Activated T-helper 1 cell treated with anti-CD3 and anti-CD28 coated beads, Interleukin-12 subunit alpha, Interleukin-12 subunit beta, Interleukin-2, Interleukin-4 antibody, amounts not matched to agents 30 ng/mL and 10 ng/mL and 1 ng/mL, durations not matched to agents 14 hours and 24 hours and 36 hours (primary cell): ENCODE measurements at regions of chr20 and their contacts with region 1.

Region 1: DNA sequence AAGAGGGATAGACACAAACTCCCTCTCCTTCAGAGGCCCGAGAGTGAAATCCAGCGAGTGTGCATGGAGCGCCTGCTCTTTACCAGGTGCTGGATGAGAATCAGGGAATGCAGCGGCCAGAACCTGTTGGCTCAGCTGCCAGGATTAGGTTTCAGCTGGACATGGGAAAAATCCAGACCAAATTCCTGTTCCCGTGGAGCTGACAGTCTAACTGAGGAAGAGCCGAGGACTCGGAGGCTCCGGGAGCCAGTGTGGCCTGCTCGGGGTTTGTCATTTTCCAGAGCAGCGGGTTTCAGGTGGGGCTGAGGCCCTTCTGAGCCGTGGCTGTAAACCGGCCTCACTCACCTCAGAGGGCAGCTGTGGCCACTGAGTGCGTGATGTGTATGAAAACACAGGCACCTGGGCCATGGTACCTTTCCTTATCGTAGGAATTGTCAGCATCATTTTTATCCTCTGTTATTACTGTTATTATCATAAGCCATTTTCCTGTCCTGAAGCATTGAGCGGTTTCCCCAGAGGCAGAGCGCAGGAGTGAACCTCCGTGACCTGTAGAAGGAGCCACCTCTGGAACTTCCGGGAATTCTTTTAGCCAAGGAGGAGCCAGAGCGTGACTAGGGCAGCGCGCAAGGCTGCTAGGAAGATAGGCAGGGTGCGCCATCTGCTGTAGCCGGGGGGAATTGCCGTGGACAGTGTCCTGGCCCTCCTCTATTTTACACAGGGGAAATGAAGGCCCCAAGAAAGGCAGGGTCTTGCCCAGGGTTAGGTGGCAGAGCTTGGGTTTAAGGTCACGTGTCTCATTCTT is 27.3 kb downstream of the PKIG start:
- DNase-seq: peak; percentile 69
- H3K4me3 Mint-ChIP-seq: peak overlapping the region; percentile 39
- H3K27ac Mint-ChIP-seq: no peak overlapping the region
- H3K4me1 Mint-ChIP-seq: peaks cover 12% of the 10 kb centered on the region
- H3K27me3 Mint-ChIP-seq: no peaks in the 10 kb centered on the region

Region 2: DNA sequence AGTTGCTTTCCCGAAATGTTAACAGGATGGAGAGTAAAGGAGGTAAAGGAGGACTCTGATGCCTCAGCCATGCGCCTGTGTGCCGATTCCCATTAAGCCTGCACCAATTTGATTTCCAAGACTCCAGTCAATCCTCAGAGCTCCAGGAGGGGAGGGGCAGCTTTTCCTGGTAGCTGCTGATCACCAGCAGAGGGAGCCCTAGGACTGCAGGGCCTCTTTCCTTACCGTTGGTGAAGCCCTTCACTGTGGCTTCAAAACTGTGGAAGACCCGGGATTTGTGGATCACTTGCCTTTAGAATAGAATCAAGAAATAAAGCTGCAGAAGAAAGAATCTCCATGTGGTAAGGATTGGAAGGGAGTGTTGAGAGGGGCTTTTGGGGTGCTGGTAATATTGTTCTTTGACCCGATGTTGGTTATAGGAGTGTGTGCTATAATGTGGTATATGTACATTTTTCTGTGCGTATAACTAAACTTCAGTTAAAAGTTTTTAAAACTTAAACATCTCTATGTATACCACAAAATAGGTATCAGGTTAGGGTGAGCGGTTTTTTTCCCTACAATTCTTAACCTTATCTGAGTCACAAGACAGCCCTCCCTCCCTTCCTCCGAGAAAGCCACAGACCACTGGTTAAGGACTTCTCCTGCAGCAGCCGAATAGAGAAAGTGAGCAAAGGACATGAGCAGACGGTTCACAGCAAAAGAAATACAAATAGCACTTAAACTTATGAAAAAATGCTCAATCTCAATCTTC is 392.2 kb before region 1 on chr20:
- intact Hi-C with region 1: loop called (anchors 1 kb)
- DNase-seq: peak; percentile 50
- H3K4me3 Mint-ChIP-seq: peak overlapping the region; percentile 73
- H3K27ac Mint-ChIP-seq: peak overlapping the region; percentile 45
- H3K4me1 Mint-ChIP-seq: peaks cover 41% of the 10 kb centered on the region
- H3K27me3 Mint-ChIP-seq: peaks cover 3% of the 10 kb centered on the region

Region 3: DNA sequence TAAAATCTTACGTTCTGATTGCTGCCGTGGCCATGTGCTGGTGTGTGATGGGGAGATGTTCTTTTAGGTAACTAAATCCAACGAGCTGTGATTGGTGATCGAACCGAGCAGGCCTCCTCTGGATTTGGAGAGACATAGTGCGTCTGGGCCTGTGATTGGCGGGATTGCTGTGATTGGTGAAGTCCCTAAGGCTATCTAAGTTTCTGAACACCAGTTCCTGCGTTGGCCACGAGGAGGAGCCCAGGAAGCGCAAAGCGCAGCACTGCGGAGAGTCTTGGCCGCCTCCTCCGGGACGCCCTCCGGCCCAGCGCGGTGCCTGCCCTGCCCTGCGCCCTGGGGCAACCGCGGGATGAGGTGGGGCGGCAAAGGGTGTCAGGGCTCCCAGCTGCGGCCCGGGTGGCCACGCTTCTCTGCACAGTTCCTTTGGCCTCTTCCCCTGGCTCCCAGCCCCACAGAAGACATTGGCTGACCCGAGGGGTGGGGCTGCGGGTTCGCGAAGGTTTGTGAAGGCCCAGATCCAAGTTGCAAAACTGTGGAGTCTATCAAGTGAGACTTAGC is 221.2 kb before region 1 on chr20:
- intact Hi-C with region 1: loop called (anchors 1 kb)
- DNase-seq: peak; percentile 57
- H3K4me3 Mint-ChIP-seq: peak overlapping the region; percentile 17
- H3K27ac Mint-ChIP-seq: no peak overlapping the region
- H3K4me1 Mint-ChIP-seq: peaks cover 5% of the 10 kb centered on the region
- H3K27me3 Mint-ChIP-seq: peaks cover 6% of the 10 kb centered on the region

Region 4: GRCh38 chr20:44483112-44483511 is 126.6 kb before region 1 on chr20:
- intact Hi-C with region 1: loop called (anchors 1 kb)
- DNase-seq: no peak
- H3K4me3 Mint-ChIP-seq: no peak overlapping the region
- H3K27ac Mint-ChIP-seq: no peak overlapping the region
- H3K4me1 Mint-ChIP-seq: peaks cover 12% of the 10 kb centered on the region
- H3K27me3 Mint-ChIP-seq: no peaks in the 10 kb centered on the region

Region 5: DNA sequence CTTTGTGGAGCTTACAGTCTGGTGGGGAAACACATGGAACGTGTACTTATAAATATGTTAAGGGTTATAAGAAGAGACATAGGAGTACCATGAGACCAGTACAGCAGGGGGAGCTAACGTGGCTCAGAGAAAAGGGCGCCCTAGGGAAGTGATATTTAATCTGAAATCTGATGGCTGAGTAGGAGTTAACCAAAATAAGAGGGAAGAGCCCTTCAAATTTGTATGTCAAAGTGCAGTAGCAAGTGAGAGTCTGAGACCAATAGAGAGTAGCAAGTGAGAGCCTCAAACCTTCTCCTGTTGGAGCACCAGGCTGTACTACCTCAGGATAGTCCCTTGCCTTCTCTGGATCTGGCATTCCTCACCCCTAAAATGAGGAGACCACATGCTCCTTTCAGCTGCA is 33.4 kb before region 1 on chr20:
- intact Hi-C with region 1: loop called (anchors 1 kb)
- DNase-seq: no peak
- H3K4me3 Mint-ChIP-seq: no peak overlapping the region
- H3K27ac Mint-ChIP-seq: peak overlapping the region; percentile 59
- H3K4me1 Mint-ChIP-seq: peaks cover 27% of the 10 kb centered on the region
- H3K27me3 Mint-ChIP-seq: no peaks in the 10 kb centered on the region

Region 6: DNA sequence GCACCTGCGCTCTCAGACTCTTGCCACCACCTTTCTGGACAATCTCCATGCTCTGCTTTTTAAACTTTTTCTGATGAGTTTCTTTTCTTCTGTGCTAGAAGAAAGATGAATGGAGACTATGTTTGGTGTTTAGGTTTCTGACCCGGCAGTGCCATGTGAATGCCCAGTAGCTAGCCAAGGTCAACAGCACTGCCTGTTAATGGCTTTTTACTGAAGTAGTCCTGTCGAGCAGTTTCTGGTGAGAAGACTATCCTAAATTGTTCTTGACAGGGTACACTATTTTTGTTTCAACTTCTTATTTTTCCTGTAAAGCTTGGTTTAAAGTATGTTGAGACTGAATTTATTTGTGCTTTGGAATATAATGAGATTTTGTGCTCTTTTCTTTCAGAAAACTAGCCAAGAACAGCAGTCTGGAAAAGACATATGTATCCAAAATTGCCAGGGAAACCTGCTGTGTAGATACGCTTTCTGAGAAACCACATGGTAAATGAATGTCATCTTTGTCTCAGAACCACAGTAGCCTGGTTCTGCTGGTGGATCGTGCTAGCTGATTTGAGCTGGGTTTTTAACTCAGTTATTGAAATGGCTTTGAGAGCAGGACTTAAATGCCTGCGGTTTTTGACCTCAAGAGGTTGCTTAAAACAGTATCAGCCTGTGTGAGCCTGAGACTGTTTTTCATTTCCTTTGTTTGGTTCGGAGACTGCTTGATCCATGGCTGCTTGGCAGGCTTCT is 443.2 kb after region 1 on chr20:
- intact Hi-C with region 1: no loop called
- DNase-seq: no peak
- H3K4me3 Mint-ChIP-seq: no peak overlapping the region
- H3K27ac Mint-ChIP-seq: peak overlapping the region; percentile 73
- H3K4me1 Mint-ChIP-seq: peaks cover 62% of the 10 kb centered on the region
- H3K27me3 Mint-ChIP-seq: no peaks in the 10 kb centered on the region